ENCODE measurements at regions of chr16 and their contacts with region 1.

Region 1: DNA sequence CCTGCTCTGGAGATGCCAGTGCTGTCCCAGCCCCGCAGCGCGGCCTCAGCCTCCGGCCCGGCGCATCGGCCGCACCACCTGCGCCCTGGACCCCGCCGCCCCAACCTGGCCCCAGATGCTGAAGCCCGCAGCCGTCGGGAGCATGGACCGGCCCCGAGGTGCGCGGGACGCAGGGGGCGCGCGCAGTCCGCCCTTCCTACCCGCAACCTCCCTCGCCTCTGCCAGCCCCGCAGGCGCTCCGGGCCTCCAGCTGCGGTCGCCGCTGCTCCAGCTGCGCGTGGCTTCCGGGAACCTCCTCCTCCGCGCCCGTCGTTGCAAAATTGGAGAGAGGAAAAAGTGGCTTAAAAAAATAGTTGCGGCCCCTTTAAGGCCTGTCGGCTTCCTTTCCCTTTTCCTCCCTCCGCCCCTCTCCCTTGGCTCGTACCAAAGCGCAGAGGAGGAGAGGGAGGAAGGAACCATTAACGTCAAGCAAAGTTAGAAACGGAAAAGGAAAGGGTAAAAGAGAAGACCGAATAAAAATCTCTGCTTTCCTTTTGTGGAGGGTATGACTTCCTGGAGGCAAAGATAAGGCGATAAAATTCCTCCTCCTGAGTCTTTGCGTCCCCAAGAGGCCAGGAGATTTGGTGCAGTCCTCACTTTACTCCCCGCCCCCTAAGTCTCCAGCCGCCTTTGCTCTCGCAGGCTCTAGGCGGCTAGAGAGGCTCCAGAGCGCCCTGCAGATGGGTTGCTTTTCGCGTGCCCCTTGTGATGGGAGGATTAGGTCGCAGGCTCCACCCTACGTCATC is at the start of gene CDIPT:
- DNase-seq: peak; percentile 99
- H3K4me3 ChIP-seq: peak within 1 kb of the TSS; percentile 96
- H3K27ac ChIP-seq: peak within 1 kb of the TSS; percentile 99
- H3K4me1 ChIP-seq: peaks cover 4% of the 10 kb centered on the region
- H3K27me3 ChIP-seq: no peaks in the 10 kb centered on the region
- CTCF ChIP-seq: peak; percentile 88
- total RNA-seq, gene CDIPT: 51.7 and 55.6 TPM in 2 replicates

Region 2: DNA sequence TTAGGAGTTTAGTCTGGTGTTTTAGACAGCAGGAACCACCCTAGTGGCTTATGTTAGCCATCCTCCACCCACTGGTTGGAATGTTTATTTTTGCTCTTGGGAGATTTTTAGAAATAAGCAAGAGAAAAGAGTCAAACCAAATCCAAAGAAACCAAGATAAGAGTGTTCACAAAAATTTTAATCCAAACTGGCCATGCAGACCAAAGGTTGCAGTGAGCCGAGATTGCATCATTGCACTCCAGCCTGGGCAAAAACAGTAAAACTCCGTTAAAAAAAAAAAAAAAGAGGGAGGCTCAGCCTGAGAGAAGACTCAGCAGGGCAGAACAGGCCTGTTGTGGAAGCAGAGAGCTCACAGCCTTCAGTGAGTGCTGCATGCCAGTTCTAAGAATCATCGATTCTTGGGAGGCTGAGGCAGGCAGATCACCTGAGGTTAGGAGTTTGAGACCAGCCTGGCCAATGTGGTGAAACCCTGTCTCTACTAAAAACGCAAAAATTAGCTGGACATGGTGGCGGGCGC is 105.1 kb before region 1 on chr16:
- CTCF ChIA-PET with region 1: no interaction called
- POLR2A ChIA-PET with region 1: no interaction called
- intact Hi-C with region 1: no loop called
- DNase-seq: no peak
- H3K4me3 ChIP-seq: no peak overlapping the region
- H3K27ac ChIP-seq: no peak overlapping the region
- H3K4me1 ChIP-seq: no peaks in the 10 kb centered on the region
- H3K27me3 ChIP-seq: no peaks in the 10 kb centered on the region
- CTCF ChIP-seq: no peak

Region 3: GRCh38 chr16:29815793-29816693 is 47.0 kb before region 1 on chr16 and contains the start of gene PAGR1:
- CTCF ChIA-PET with region 1: no interaction called
- POLR2A ChIA-PET with region 1: no interaction called
- intact Hi-C with region 1: loop called (anchors 10 kb)
- DNase-seq: peak; percentile 99
- H3K4me3 ChIP-seq: peak within 1 kb of the TSS; percentile 87
- H3K27ac ChIP-seq: peak within 1 kb of the TSS; percentile 92
- H3K4me1 ChIP-seq: peaks cover 48% of the 10 kb centered on the region
- H3K27me3 ChIP-seq: no peaks in the 10 kb centered on the region
- CTCF ChIP-seq: peak; percentile 93
- total RNA-seq, gene PAGR1: 47.4 and 50.0 TPM in 2 replicates

Region 4: DNA sequence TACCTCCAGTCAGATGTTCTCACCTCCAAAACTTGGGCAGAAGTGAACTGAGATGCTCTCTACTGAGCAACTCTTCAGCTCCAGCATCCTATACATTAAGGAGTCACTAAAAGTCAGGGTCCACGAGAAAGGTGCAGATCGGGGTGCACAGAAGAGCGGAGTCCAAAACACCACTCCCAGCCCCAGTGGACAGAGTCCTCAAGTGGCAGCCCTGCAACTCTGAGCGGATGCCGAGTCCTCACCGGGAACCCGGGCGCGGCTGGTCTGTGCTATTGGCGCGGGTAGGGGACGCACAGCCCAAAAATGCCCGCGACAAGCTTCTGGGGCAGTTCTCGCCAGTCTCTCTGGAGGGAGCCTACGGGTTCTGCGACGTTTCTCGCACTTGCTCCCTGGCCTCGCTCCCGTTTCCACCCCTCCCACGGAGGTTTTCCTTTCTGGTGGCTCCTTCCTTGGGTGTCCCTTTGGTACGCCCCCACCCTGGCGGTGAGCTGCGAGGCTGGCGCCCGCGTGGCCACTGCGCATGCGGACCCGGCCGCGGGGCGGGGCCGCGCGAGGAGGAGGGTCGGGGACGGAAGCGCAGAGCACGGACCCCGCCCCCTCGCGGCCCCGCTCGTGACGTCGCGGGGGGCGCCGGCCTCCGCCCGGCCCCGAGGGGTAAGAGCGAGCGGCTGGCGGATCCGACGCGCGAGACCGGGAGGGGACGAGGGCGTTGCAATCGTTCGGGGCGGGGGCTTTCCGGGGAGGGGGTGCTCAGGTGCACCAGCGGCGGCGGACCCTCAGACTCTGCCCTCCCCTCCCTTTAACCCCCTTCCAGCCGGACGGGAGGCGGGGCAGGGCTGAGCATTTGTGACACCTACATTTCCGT is 98.6 kb after region 1 on chr16 and contains the start of gene TMEM219:
- CTCF ChIA-PET with region 1: no interaction called
- POLR2A ChIA-PET with region 1: no interaction called
- intact Hi-C with region 1: loop called (anchors 2 kb)
- DNase-seq: peak; percentile 95
- H3K4me3 ChIP-seq: peak within 1 kb of the TSS; percentile 65
- H3K27ac ChIP-seq: peak within 1 kb of the TSS; percentile 90
- H3K4me1 ChIP-seq: peaks cover 13% of the 10 kb centered on the region
- H3K27me3 ChIP-seq: no peaks in the 10 kb centered on the region
- CTCF ChIP-seq: peak; percentile 30; the same call in 1 of the 2 replicates
- total RNA-seq, gene TMEM219: 48.3 and 52.7 TPM in 2 replicates

Measured in A673 (cell line).